ENCODE measurements at regions of chr1 and their contacts with region 1.

Region 1: DNA sequence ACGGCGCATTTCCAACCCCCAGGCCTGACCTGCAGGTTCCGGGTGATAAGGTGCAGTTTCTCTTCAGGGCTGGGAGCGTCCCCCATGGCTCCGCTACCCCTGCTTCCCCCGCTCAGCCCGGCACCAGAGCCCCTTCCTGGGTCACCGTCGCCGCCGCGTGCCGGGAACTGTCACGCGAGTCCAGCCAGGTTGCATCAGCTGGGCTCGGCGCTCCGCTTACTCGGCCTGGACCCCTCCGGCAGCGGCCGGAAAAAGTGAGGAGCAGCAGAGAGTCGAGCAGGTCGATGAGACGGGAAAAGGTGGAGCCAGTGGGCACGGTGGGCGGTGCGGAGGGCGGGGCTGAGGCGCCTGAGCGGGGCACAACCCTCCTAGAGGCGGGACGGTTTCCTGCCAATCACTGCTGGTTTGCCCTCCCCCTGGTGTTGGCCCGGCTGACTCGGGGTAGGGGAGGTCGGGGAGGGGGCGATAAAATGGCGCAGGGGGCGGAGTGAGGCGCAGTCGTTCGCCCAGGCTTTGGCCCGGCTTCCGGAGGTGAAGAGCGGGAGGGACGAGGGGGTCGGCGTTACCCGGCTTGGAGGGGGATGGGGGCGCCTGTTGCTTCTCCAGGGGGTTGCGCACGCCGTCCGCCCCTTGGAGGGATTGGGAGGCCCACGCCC is at the starts of genes S100PBP and YARS1:
- DNase-seq: peak; percentile 100
- H3K4me3 Mint-ChIP-seq: peak within 1 kb of the TSS; percentile 99
- H3K27ac Mint-ChIP-seq: peak within 1 kb of the TSS; percentile 98
- H3K4me1 Mint-ChIP-seq: peaks cover 51% of the 10 kb centered on the region
- H3K27me3 Mint-ChIP-seq: no peaks in the 10 kb centered on the region
- total RNA-seq, gene S100PBP: 43.8 and 46.9 TPM in 2 replicates
- total RNA-seq, gene YARS1: 206 and 214 TPM in 2 replicates

Region 2: DNA sequence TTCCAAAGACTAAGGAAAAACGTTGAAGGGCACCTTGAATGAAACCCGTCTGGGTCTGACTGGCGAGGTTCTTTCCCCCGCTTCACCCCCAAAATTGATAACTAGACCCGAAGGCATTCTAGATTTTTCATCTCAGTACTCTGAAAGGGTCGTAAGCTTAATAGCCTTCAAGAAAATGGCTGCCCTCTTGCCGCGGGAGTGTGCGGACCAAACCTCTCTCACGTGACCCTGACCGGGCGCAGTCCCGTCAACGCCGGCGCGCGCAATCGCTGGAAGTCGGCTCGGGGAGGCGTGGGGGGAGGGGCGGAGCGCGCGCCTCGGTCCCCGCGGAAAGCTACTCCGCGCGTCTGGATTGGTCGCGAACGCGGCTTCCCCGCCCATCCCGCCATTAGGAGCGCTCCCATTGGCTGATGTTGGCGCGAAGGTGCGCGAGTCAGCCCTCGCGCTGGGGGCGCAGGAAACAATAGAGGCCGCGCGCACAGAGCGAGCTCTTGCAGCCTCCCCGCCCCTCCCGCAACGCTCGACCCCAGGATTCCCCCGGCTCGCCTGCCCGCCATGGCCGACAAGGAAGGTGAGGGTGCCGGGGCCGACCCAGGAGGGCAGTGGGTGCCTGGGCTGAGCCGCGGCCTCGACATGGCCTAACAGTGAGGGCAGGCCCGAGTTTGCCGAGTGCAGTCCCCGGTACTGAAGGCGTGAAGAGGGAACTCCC is 166.4 kb before region 1 on chr1 and contains the start of gene RBBP4:
- intact Hi-C with region 1: loop called (anchors 1 kb)
- DNase-seq: peak; percentile 100
- H3K4me3 Mint-ChIP-seq: peak within 1 kb of the TSS; percentile 99
- H3K27ac Mint-ChIP-seq: peak within 1 kb of the TSS; percentile 100
- H3K4me1 Mint-ChIP-seq: peaks cover 37% of the 10 kb centered on the region
- H3K27me3 Mint-ChIP-seq: no peaks in the 10 kb centered on the region
- total RNA-seq, gene RBBP4: 329 and 331 TPM in 2 replicates

Region 3: GRCh38 chr1:32801096-32801715 is 16.1 kb before region 1 on chr1:
- intact Hi-C with region 1: loop called (anchors 1 kb)
- DNase-seq: peak; percentile 84
- H3K4me3 Mint-ChIP-seq: peak overlapping the region; percentile 58
- H3K27ac Mint-ChIP-seq: peak overlapping the region; percentile 78
- H3K4me1 Mint-ChIP-seq: peaks cover 41% of the 10 kb centered on the region
- H3K27me3 Mint-ChIP-seq: no peaks in the 10 kb centered on the region

Region 4: DNA sequence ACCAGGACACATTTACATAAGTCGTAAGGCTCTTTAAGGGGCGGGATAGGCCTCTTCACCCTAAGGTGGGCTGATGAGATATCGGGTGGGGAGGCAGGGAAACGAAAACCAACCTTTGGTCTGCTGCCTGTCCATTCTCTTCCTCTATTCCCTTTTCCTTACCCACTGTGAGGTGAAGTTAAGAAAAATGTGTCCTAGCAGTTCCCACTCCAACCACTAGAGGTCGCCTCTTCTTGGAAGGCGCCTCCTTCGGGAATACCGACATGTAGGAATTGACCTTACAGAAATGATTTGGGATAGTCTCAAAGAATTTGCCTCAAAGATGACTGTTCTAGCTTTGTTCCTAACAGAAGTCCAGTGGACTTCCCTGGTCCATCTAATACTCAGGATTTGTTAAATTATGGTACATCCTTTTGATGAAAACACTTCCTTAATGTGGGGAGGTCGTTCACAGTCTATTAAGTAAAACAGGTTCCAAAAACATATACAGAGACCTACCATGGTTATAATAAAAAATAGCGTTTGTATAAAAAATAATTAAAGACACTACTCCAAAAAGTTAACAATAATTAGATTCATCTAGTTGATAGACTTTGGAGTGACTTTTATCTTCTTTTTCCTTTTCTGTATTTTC is 277.8 kb after region 1 on chr1:
- intact Hi-C with region 1: loop called (anchors 5 kb)
- DNase-seq: peak; percentile 77
- H3K4me3 Mint-ChIP-seq: no peak overlapping the region
- H3K27ac Mint-ChIP-seq: no peak overlapping the region
- H3K4me1 Mint-ChIP-seq: peaks cover 59% of the 10 kb centered on the region
- H3K27me3 Mint-ChIP-seq: no peaks in the 10 kb centered on the region

Region 5: GRCh38 chr1:33256701-33257399 is 439.6 kb after region 1 on chr1:
- intact Hi-C with region 1: loop called (anchors 5 kb)
- DNase-seq: peak; percentile 85
- H3K4me3 Mint-ChIP-seq: peak overlapping the region; percentile 96
- H3K27ac Mint-ChIP-seq: peak overlapping the region; percentile 98
- H3K4me1 Mint-ChIP-seq: peaks cover 17% of the 10 kb centered on the region
- H3K27me3 Mint-ChIP-seq: peaks cover 3% of the 10 kb centered on the region